CD4-positive, alpha-beta memory T cell (primary cell): ENCODE measurements at regions of chr15 and their contacts with region 1.

Region 1: DNA sequence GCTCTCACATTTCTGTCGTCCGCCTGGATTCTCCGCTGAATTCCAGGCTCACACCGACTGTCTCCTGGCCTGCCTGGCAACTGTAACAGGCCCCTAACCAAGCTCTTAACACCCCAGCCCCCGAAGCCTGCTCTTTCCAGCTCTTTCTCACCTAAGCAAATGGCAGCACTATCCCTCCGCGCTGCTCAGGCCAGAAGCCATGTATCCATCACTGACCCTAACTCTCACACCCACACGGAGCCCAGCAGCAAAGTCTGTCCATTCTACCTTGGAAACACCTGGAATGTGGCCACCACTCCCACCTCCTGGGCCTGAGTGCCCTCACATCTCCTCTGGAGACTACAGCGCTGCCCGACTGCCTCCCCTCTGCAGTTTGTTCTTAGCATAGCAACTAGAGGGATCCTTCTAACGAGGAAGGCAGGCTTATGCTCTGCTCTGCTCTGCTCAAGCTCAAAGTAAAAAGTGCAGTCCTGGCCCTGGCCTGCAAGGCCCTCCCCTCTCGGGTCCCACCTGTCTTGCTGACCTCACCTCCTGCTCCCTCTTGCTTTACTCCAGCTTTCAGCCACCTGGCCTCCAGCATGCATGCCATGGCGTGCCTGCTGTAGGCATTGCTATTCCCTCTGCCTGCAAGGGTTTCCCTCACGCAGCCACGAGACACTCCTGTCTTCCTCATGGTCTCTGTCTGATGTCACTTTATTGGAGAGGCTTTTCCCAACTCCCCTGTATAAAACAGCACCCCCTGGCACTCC is 27.2 kb downstream of the FEM1B start:
- DNase-seq: no peak
- H3K4me3 ChIP-seq: no peak overlapping the region
- H3K4me3 Mint-ChIP-seq: no peak overlapping the region
- H3K27ac ChIP-seq: no peak overlapping the region
- H3K27ac Mint-ChIP-seq: peak overlapping the region in 2 of 7 donors; percentile 42 to 67
- H3K4me1 ChIP-seq: peaks cover 4% of the 10 kb centered on the region
- H3K4me1 Mint-ChIP-seq: peaks cover 8 to 25% (median 14%) of the 10 kb centered on the region in 4 donors
- H3K27me3 ChIP-seq: no peaks in the 10 kb centered on the region
- H3K27me3 Mint-ChIP-seq: peaks cover 0 to 4% of the 10 kb centered on the region in 2 donors

Region 2: GRCh38 chr15:68252925-68253534 is 51.7 kb before region 1 on chr15:
- CTCF ChIA-PET with region 1: interaction called, 95 read pairs
- POLR2A ChIA-PET with region 1: interaction called, 9 read pairs
- intact Hi-C with region 1: loop called (anchors 1 kb)
- DNase-seq: peak; percentile 48 to 57 (median 55)
- H3K4me3 ChIP-seq: no peak overlapping the region
- H3K4me3 Mint-ChIP-seq: no peak overlapping the region
- H3K27ac ChIP-seq: no peak overlapping the region
- H3K27ac Mint-ChIP-seq: peak overlapping the region in 1 of 7 donors; percentile 29
- H3K4me1 ChIP-seq: peaks cover 5% of the 10 kb centered on the region
- H3K4me1 Mint-ChIP-seq: peaks cover 0 to 4% (median under 1%) of the 10 kb centered on the region in 4 donors
- H3K27me3 ChIP-seq: no peaks in the 10 kb centered on the region
- H3K27me3 Mint-ChIP-seq: peaks cover 0 to 3% of the 10 kb centered on the region in 2 donors

Region 3: GRCh38 chr15:68292157-68292781 is 12.5 kb before region 1 on chr15:
- CTCF ChIA-PET with region 1: interaction called, 10 read pairs
- POLR2A ChIA-PET with region 1: no interaction called
- intact Hi-C with region 1: no loop called
- DNase-seq: no peak
- H3K4me3 ChIP-seq: no peak overlapping the region
- H3K4me3 Mint-ChIP-seq: no peak overlapping the region
- H3K27ac ChIP-seq: no peak overlapping the region
- H3K27ac Mint-ChIP-seq: peak overlapping the region in 2 of 7 donors; percentile 29
- H3K4me1 ChIP-seq: peaks cover 31% of the 10 kb centered on the region
- H3K4me1 Mint-ChIP-seq: peaks cover 30 to 61% (median 40%) of the 10 kb centered on the region in 4 donors
- H3K27me3 ChIP-seq: no peaks in the 10 kb centered on the region
- H3K27me3 Mint-ChIP-seq: no peaks in the 10 kb centered on the region

Region 4: DNA sequence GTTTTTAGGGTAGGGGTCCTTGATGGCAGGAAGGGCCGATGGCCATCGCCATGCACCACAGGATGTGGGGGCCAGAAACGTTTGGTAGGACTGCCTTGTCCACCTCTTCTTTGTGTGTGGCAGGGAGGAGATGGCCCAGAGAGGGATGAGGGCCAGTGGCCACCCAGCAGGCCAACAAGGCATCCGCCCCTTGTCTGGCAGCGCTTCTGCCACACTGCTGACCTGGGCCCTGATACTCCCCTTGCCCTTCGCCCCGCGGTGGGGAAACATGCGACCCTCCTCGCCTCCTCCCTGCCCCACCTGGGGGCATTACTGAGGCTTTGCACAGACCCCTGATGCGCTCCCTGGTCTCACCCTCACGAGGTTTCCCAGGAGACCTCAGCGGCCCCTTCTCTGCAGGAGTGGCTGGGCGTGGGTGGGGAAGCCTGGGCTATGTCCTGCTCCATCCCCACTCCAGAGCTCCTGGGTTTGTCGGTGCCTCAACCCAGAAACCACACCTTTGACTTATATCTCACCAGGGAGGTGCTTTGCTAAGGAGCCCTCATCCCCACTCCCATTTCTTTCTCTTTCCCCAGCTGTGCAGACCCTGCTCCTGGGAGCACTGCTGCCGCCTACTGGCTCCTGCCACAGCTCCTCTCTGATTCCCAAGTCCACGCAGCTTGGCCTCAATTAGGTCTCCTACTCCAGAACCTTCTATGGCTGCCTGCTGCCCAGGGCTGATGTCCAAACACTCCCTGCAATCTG is 11.5 kb after region 1 on chr15:
- CTCF ChIA-PET with region 1: interaction called, 16 read pairs
- POLR2A ChIA-PET with region 1: no interaction called
- intact Hi-C with region 1: no loop called
- DNase-seq: no peak
- H3K4me3 ChIP-seq: no peak overlapping the region
- H3K4me3 Mint-ChIP-seq: no peak overlapping the region
- H3K27ac ChIP-seq: no peak overlapping the region
- H3K27ac Mint-ChIP-seq: no peak overlapping the region
- H3K4me1 ChIP-seq: no peaks in the 10 kb centered on the region
- H3K4me1 Mint-ChIP-seq: no peaks in the 10 kb centered on the region
- H3K27me3 ChIP-seq: no peaks in the 10 kb centered on the region
- H3K27me3 Mint-ChIP-seq: peaks cover 0 to 4% of the 10 kb centered on the region in 2 donors

Region 5: GRCh38 chr15:68328443-68328842 is 23.7 kb after region 1 on chr15:
- CTCF ChIA-PET with region 1: interaction called, 6 read pairs
- POLR2A ChIA-PET with region 1: no interaction called
- intact Hi-C with region 1: loop called (anchors 1 kb)
- DNase-seq: no peak
- H3K4me3 ChIP-seq: no peak overlapping the region
- H3K4me3 Mint-ChIP-seq: peak overlapping the region in 1 of 8 donors; percentile 49
- H3K27ac ChIP-seq: no peak overlapping the region
- H3K27ac Mint-ChIP-seq: peak overlapping the region in 1 of 7 donors; percentile 32
- H3K4me1 ChIP-seq: peaks cover 4% of the 10 kb centered on the region
- H3K4me1 Mint-ChIP-seq: peaks cover 0 to 14% (median 4%) of the 10 kb centered on the region in 4 donors
- H3K27me3 ChIP-seq: no peaks in the 10 kb centered on the region
- H3K27me3 Mint-ChIP-seq: peaks cover 7 to 39% of the 10 kb centered on the region in 2 donors

Region 6: DNA sequence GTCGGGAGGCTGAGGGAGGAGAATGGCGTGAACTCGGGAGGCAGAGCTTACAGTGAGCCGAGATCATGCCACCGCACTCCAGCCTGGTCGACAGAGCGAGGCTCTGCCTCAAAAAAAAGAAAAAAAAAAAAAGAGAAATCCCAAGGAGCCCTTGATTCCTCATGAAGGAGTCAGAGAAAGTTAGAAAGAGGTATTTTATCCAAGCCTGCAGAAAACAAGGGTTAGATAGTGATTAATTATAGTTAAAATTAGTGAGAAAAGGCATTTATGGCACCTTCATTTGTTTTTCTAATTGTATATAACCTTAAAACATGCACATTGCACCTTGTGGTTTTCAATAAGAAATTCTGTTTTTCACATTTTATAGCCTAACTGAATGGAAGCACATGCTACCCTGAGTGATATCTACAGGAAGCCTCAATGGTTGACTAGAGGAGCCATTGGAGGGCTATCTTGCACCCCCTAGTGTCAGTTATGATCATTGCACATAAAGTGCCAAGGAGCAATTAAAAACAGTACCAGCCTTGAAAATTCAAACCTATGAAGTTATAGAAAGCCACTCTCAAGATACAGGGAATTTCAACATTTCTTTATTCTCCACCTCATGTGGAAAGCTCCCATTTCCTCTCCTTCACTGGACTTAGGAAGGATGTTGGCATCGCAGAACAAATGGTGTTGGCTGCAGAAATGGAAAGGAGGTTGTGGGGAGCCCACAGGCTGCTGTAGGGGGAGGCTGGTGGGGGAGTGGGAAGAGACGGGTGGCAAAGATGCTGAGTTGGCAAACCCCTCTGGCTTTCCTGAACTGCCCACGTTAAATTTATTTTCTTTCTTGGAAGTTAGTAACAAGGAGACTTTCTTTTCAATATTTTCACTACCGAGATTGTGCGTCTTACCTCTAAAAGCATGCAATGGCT is 78.7 kb after region 1 on chr15:
- CTCF ChIA-PET with region 1: interaction called, 20 read pairs
- POLR2A ChIA-PET with region 1: no interaction called
- intact Hi-C with region 1: no loop called
- DNase-seq: peak in 4 of 5 donors; percentile 39 to 53 (median 42)
- H3K4me3 ChIP-seq: no peak overlapping the region
- H3K4me3 Mint-ChIP-seq: no peak overlapping the region
- H3K27ac ChIP-seq: no peak overlapping the region
- H3K27ac Mint-ChIP-seq: no peak overlapping the region
- H3K4me1 ChIP-seq: peaks cover 11% of the 10 kb centered on the region
- H3K4me1 Mint-ChIP-seq: peaks cover 8 to 13% (median 11%) of the 10 kb centered on the region in 4 donors
- H3K27me3 ChIP-seq: no peaks in the 10 kb centered on the region
- H3K27me3 Mint-ChIP-seq: peaks cover 0 to 5% of the 10 kb centered on the region in 2 donors

Region 7: GRCh38 chr15:68526269-68526668 is 221.5 kb after region 1 on chr15:
- CTCF ChIA-PET with region 1: no interaction called
- POLR2A ChIA-PET with region 1: no interaction called
- intact Hi-C with region 1: no loop called
- DNase-seq: no peak
- H3K4me3 ChIP-seq: no peak overlapping the region
- H3K4me3 Mint-ChIP-seq: no peak overlapping the region
- H3K27ac ChIP-seq: no peak overlapping the region
- H3K27ac Mint-ChIP-seq: no peak overlapping the region
- H3K4me1 ChIP-seq: peaks cover 10% of the 10 kb centered on the region
- H3K4me1 Mint-ChIP-seq: peaks cover 5 to 16% (median 10%) of the 10 kb centered on the region in 4 donors
- H3K27me3 ChIP-seq: peaks cover 3% of the 10 kb centered on the region
- H3K27me3 Mint-ChIP-seq: peaks cover 10 to 11% of the 10 kb centered on the region in 2 donors